ENCODE measurements at regions of chr17 and their contacts with region 1.

Region 1: DNA sequence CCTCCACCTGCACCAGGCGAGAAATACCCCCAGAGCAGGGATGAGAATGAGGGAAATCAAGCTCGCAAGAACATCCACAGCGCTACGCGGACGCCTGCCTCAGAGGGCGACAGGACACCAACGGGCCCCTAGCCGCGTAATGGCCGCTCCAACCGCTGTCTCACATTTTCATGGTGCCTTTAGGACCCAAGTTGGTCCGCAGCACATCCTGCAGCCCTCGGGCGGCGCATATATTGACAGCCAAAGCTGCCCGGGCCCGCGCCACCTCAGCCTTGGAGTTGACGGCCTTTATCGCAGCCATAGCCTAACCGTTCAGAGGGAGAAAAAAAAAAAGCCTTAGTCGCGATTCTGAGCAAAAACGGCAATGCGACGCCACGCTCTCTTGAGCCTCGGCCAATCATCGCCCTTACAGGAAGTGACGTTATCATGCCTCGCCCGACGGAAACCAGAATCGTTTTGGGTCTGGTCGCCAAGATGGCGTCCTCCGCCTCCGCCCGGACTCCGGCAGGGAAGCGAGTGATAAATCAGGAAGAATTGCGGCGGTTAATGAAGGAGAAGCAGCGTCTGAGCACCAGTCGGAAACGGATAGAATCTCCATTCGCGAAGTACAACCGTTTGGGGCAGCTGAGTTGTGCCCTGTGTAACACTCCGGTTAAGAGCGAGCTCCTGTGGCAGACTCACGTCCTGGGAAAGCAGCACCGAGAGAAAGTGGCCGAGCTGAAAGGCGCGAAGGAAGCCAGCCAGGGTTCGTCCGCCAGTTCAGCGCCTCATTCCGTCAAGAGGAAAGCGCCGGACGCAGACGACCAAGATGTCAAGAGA is at the starts of genes CCT6B and ZNF830:
- DNase-seq: peak; percentile 93 to 95 (median 93)
- ATAC-seq: peak; percentile 97 to 99 (median 98)
- H3K4me3 ChIP-seq: peak within 1 kb of the TSS; percentile 46 to 97 (median 88)
- H3K27ac ChIP-seq: peak within 1 kb of the TSS; percentile 90 to 98 (median 96)
- H3K4me1 ChIP-seq: peaks cover 0 to 27% (median 21%) of the 10 kb centered on the region in 12 donors
- H3K27me3 ChIP-seq: no peaks in the 10 kb centered on the region
- CTCF ChIP-seq: peak in 2 of 12 donors; percentile 4 to 5
- POLR2A ChIP-seq: peak in 1 of 2 donors; percentile 58
- total RNA-seq, gene CCT6B: 0.75 to 2.5 (median 1.9) TPM
- total RNA-seq, gene ZNF830: 5.7 to 10.1 (median 7.9) TPM

Region 2: DNA sequence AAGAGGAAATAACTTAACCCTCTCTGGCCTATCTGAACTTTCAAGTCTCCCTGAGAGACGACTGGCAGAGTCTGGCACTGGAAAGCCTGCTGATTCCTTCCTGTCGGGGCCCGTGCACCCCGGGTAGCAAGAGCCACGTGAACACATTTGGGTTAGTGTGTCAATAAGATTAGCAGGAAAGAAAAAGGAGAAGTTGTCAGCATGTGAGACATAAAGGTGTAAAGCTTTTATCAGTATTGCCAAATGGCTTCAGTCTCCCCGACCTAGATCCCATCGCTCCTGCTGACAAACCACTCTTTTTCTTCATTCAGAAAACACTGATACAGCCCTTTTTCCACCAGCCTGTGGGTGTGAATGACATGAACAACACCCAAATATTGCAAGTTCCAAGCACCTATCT is 74.5 kb before region 1 on chr17:
- intact Hi-C with region 1: no loop called
- DNase-seq: no peak
- ATAC-seq: no peak
- H3K4me3 ChIP-seq: no peak overlapping the region
- H3K27ac ChIP-seq: no peak overlapping the region
- H3K4me1 ChIP-seq: no peaks in the 10 kb centered on the region
- H3K27me3 ChIP-seq: peaks cover 0 to 89% (median 16%) of the 10 kb centered on the region in 9 donors
- CTCF ChIP-seq: no peak
- POLR2A ChIP-seq: no peak

Region 3: DNA sequence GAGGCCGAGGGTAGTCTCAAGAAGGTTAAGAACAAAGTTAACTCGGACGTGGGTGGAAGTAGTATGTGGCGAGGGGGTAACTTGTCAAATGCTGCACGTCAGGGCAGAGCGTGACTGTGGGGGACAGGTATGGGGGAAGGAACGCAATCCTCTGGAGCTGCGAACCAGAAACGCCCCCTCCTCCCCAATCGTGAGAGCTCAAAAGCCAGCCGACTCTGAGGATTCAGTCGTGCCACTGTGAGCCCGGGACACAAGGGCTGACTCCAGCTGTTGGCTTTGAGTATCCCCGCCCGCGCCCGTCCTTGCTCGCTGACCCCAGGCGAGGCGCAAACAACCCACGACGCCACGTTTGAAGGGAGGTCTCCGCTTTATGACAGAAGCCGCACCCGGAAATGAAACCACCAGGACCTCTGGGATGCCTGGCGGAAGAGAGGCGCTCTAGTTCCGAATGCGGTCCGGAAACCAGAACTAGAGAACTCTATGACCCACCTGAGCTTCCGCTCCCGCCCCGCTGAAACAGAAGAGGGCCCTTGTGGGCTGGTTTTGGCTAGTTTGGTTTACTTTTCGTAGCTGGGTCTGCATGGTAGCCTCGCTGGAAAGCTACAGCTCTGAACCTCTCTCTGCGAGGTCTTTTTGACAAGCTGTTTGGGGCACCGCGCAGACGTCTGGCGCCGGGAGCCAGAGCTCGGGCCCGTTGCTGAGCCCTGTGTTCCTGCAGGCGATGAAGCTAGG is 617.1 kb after region 1 on chr17 and contains the start of gene PEX12:
- intact Hi-C with region 1: loop called in 1 of 10 experiments (anchors 10 kb)
- DNase-seq: peak; percentile 91 to 95 (median 93)
- ATAC-seq: peak; percentile 98 to 99 (median 98)
- H3K4me3 ChIP-seq: peak within 1 kb of the TSS; percentile 44 to 93 (median 79)
- H3K27ac ChIP-seq: peak within 1 kb of the TSS; percentile 77 to 96 (median 92)
- H3K4me1 ChIP-seq: peaks cover 0 to 23% (median 17%) of the 10 kb centered on the region in 12 donors
- H3K27me3 ChIP-seq: no peaks in the 10 kb centered on the region
- CTCF ChIP-seq: peak in 2 of 12 donors; percentile 7 to 30
- POLR2A ChIP-seq: peak in 1 of 2 donors; percentile 80
- total RNA-seq, gene PEX12: 6.6 to 10.8 (median 8.8) TPM

Measured in heart left ventricle (tissue), 16 donors.